ENCODE measurements at regions of chr15 and their contacts with region 1.

Region 1: DNA sequence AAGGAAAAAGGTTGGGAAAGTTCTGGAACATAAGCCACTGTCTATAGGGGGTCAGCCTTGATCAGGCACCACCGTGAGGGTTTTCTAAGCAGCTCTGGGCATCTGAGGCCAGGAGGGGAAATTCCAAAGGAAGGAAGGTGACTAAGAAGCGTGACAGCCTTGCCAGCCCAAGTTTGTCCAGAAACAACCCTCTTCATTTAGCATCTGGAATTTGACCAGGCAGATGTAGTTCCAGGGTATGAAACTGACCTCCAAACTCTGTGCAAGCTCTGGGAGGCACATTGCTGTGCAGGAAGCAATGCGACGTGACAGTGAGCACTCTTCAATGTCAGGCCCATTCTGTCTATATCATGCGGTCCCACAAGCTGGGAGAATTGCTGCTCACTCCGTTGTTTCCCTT is 85.4 kb upstream of the TPM1 start:
- DNase-seq: no peak
- ATAC-seq: peak in 1 of 2 experiments; percentile 40; a peak in 3 of 6 replicates
- H3K4me3 ChIP-seq: no peak overlapping the region
- H3K27ac ChIP-seq: peak overlapping the region; percentile 48 to 74; a peak in 4 of 6 replicates
- H3K4me1 ChIP-seq: peaks cover 25% of the 10 kb centered on the region
- CTCF ChIP-seq: no peak
- EP300 ChIP-seq: no peak
- POLR2A ChIP-seq: no peak
- RAD21 ChIP-seq: no peak

Region 2: DNA sequence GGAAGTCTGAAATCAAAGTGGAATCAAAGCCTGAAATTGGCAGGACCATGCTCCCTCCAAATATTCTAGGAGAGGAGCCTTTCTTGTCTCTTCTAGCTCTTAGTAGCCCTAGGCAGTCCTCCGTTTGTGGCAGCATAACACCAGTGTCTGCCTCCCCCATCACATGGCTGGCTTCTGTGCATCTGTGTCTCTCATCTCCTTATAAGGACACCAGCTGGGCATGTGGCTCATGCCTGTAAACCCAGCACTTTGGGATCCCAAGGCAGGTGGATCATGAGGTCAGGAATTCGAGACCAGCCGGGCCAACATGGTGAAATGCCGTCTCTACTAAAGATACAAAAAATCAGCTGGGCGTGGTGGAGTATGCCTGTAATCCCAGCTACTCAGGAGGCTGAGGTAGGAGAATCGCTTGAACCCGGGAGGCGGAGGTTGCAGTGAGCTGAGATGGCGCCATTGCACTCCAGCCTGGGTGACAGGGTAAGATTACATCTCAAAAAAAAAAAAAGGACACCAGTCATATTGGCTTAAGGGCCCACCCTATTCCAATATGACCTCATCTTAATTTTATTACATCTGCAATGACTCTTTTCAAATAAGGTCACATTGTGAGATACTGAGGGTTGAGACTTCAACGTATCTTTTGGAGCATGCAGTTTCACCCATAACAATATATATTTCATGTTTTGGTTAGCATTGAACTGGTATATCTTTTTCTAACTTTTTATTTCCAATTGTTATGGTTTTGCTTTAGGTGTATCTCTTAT is 62.6 kb before region 1 on chr15:
- CTCF ChIA-PET with region 1: no interaction called
- POLR2A ChIA-PET with region 1: no interaction called
- DNase-seq: peak in 1 of 2 experiments; percentile 76
- ATAC-seq: no peak
- H3K4me3 ChIP-seq: no peak overlapping the region
- H3K27ac ChIP-seq: peak overlapping the region; percentile 98 to 99
- H3K4me1 ChIP-seq: peaks cover 64% of the 10 kb centered on the region
- CTCF ChIP-seq: no peak
- EP300 ChIP-seq: no peak
- POLR2A ChIP-seq: no peak
- RAD21 ChIP-seq: no peak

Region 3: DNA sequence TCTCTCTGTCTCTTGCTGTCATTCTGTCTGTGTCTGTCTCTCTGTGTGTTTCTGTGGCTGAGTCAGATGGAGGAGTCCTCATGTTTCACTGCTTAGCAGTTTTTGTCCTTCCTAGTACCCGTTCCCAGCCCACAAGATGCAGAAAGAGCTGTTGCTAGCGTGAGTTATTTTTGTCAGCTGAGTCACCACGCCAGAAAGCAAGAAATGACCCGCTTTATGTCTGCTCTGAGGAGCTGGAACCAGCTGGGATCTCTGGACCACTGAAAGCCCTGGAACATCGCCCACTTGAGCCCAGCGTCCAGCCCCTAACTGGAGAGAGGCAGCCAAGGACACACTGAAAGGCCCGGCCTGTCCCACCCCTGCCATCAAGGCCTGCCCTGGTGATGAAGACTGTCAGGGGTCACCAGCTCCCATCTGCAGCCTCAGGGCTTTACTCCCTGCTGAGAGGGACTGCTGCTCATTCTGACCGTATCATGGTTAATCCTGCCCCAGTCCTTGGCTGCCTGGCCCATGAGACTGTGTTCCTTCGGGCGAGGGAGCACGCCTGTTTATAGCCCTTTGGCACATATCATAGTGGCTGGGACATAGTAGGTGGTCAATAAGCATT is 16.3 kb before region 1 on chr15:
- CTCF ChIA-PET with region 1: interaction called, 10 read pairs
- POLR2A ChIA-PET with region 1: no interaction called
- DNase-seq: peak; percentile 60 to 75
- ATAC-seq: peak; percentile 73 to 84
- H3K4me3 ChIP-seq: no peak overlapping the region
- H3K27ac ChIP-seq: peak overlapping the region; percentile 67 to 87
- H3K4me1 ChIP-seq: peaks cover 30% of the 10 kb centered on the region
- CTCF ChIP-seq: no peak
- EP300 ChIP-seq: no peak
- POLR2A ChIP-seq: no peak
- RAD21 ChIP-seq: no peak